ENCODE measurements at regions of chr3 and their contacts with region 1.

Region 1: DNA sequence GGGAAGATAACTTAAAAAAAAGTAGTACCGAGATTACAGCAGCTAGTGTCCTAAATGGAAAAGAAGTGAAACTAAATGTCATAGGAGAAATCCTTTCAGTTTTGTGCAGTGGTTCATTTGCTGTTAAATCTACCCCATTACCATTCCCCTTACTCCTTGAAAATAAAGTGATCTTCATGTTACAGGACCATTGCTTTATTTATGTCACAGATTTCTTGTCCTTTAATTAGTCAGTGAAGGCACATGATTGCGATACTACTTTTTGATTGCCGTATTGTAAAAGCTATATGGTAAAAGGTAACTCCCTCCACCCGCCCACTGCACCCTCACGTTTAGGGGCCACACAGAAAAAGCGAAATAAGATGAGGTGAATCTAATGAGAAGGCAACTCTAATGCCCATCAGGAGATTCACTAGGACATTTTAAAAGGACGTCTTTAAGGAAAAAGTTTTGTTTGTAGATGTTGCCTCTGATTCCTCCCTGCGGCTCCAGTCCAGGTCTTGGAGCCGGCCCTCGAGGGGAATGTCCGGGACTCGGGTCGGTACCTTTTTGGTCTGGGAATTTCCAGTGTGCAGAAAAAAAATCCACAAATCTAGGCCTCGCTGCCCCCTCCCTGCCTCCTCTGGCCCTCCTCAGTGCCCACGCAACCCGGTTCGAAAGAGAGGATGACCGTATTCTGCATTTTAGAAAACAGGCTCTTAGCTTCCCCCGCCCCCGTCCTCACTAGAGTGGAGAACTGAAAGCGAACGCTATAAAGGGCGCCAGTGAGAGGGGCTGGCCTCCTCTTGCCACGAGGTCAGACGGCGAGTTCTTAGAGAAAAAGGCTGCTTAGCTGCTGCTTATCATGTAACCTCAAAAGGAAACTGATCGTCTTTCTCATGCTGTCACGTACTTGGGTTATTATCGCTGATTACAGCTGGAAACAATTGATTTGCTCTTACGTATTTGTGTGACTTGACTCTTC is 21.8 kb upstream of the NFKBIZ start:
- DNase-seq: peak; percentile 93
- ATAC-seq: peak; percentile 90
- H3K4me3 ChIP-seq: peak overlapping the region; percentile 58 to 83 (median 62)
- H3K4me3 Mint-ChIP-seq: peak overlapping the region; percentile 90
- H3K27ac ChIP-seq: peak overlapping the region; percentile 93 to 97
- H3K27ac Mint-ChIP-seq: peak overlapping the region; percentile 96
- H3K4me1 ChIP-seq: peaks cover 44 to 45% of the 10 kb centered on the region in 2 donors
- H3K4me1 Mint-ChIP-seq: peaks cover 58% of the 10 kb centered on the region
- H3K27me3 ChIP-seq: no peaks in the 10 kb centered on the region
- H3K27me3 Mint-ChIP-seq: no peaks in the 10 kb centered on the region
- CTCF ChIP-seq: no peak

Region 2: DNA sequence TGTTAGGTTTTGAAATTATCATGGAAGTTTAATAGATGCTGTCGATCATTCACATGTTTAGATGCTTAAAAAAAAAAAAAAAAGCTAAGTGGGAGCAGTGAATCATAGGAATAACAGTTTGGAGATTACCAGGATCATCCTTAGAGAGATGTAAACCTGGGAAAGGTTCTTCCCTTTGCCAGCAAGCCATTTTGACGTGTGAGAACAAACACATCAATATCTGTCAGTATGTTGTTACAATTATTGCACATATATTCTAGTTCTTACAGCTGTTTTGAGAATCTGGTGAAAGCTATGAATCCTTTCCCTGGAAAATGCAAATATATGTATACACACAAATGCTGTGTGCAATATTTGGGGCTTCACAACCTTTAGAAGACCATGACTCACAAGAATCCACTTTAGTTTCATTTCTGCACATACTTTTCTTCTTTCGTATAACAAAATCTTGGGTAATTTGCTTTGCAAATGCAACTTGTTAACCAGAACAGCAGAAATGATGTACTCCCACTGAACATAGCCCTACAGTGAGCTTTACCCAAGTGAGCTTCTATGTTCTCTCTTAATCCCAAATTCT is 33.8 kb after region 1 on chr3:
- CTCF ChIA-PET with region 1: interaction called, 3 read pairs
- POLR2A ChIA-PET with region 1: no interaction called
- intact Hi-C with region 1: loop called (anchors 5 kb)
- DNase-seq: no peak
- ATAC-seq: peak; percentile 45
- H3K4me3 ChIP-seq: no peak overlapping the region
- H3K4me3 Mint-ChIP-seq: peak overlapping the region; percentile 11
- H3K27ac ChIP-seq: peak overlapping the region in 1 of 2 donors; percentile 6
- H3K27ac Mint-ChIP-seq: peak overlapping the region; percentile 76
- H3K4me1 ChIP-seq: peaks cover 17 to 20% of the 10 kb centered on the region in 2 donors
- H3K4me1 Mint-ChIP-seq: peaks cover 48% of the 10 kb centered on the region
- H3K27me3 ChIP-seq: no peaks in the 10 kb centered on the region
- H3K27me3 Mint-ChIP-seq: no peaks in the 10 kb centered on the region
- CTCF ChIP-seq: no peak

Region 3: GRCh38 chr3:101943029-101943428 is 115.5 kb after region 1 on chr3:
- CTCF ChIA-PET with region 1: no interaction called
- POLR2A ChIA-PET with region 1: no interaction called
- intact Hi-C with region 1: no loop called
- DNase-seq: peak; percentile 28
- ATAC-seq: peak; percentile 35
- H3K4me3 ChIP-seq: no peak overlapping the region
- H3K4me3 Mint-ChIP-seq: peak overlapping the region; percentile 66
- H3K27ac ChIP-seq: peak overlapping the region; percentile 56 to 57
- H3K27ac Mint-ChIP-seq: peak overlapping the region; percentile 90
- H3K4me1 ChIP-seq: peaks cover 58 to 70% of the 10 kb centered on the region in 2 donors
- H3K4me1 Mint-ChIP-seq: peaks cover 36% of the 10 kb centered on the region
- H3K27me3 ChIP-seq: no peaks in the 10 kb centered on the region
- H3K27me3 Mint-ChIP-seq: no peaks in the 10 kb centered on the region
- CTCF ChIP-seq: no peak

Region 4: GRCh38 chr3:102141096-102141927 is 313.8 kb after region 1 on chr3:
- CTCF ChIA-PET with region 1: no interaction called
- POLR2A ChIA-PET with region 1: no interaction called
- intact Hi-C with region 1: no loop called
- DNase-seq: no peak
- ATAC-seq: no peak
- H3K4me3 ChIP-seq: no peak overlapping the region
- H3K4me3 Mint-ChIP-seq: no peak overlapping the region
- H3K27ac ChIP-seq: no peak overlapping the region
- H3K27ac Mint-ChIP-seq: no peak overlapping the region
- H3K4me1 ChIP-seq: no peaks in the 10 kb centered on the region
- H3K4me1 Mint-ChIP-seq: no peaks in the 10 kb centered on the region
- H3K27me3 ChIP-seq: no peaks in the 10 kb centered on the region
- H3K27me3 Mint-ChIP-seq: no peaks in the 10 kb centered on the region
- CTCF ChIP-seq: no peak

Region 5: DNA sequence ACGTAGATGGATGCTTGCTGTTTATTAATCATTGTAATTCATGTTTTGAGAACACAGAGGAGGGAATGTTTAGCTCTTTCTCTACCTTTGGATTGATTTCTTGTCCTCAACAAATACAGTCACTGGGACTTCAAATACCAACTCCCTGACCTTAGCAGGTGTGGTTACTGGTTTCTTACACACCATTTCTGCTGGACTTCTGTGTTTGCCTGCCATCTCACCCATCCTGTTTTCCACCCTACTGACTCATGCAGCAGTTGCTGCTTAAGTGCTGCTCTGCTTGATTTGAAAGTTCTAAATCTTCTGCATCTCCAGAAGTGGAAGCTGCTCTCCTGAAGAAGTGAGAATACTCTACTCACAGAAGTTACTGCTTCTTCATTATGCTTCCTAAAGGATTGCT is 777.7 kb after region 1 on chr3:
- CTCF ChIA-PET with region 1: no interaction called
- POLR2A ChIA-PET with region 1: no interaction called
- intact Hi-C with region 1: no loop called
- DNase-seq: no peak
- ATAC-seq: no peak
- H3K4me3 ChIP-seq: no peak overlapping the region
- H3K4me3 Mint-ChIP-seq: no peak overlapping the region
- H3K27ac ChIP-seq: no peak overlapping the region
- H3K27ac Mint-ChIP-seq: no peak overlapping the region
- H3K4me1 ChIP-seq: no peaks in the 10 kb centered on the region
- H3K4me1 Mint-ChIP-seq: no peaks in the 10 kb centered on the region
- H3K27me3 ChIP-seq: no peaks in the 10 kb centered on the region
- H3K27me3 Mint-ChIP-seq: peaks cover 5% of the 10 kb centered on the region
- CTCF ChIP-seq: no peak

Measured in B cell (primary cell).